GM18951 (cell line): ENCODE measurements at regions of chr2 and their contacts with region 1.

Region 1: DNA sequence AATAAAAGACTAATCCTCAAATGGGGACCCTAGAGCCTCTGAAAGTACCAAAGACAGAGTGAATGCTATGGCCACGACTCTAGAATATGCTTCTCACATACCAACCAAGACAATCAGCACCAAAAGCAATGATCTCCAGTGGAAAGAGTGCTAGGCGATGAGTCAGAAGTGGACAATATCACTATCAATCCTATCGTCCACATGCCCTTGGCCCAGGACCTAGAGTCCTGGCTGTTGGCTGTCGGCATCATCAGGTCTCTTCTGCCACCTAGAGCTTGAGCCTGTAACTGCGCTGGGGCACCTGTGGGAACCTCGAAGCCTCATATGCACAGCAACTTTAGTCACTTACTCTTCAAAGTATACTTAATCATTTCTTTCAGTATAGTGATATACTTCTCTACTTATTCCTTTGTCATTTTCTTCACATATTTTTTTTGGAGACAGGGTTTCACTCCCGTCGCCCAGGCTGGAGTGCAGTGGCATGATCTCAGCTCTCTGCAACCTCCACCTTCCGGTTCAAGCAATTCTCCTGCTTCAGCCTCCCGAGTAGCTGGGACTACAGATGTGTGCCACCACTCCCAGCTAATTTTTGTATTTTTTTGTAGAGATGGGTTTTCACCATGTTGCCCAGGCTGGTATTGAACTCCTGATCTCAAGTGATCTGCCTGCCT is 29.7 kb downstream of the NOL10 start:
- POLR2A ChIP-seq: no peak

Region 2: DNA sequence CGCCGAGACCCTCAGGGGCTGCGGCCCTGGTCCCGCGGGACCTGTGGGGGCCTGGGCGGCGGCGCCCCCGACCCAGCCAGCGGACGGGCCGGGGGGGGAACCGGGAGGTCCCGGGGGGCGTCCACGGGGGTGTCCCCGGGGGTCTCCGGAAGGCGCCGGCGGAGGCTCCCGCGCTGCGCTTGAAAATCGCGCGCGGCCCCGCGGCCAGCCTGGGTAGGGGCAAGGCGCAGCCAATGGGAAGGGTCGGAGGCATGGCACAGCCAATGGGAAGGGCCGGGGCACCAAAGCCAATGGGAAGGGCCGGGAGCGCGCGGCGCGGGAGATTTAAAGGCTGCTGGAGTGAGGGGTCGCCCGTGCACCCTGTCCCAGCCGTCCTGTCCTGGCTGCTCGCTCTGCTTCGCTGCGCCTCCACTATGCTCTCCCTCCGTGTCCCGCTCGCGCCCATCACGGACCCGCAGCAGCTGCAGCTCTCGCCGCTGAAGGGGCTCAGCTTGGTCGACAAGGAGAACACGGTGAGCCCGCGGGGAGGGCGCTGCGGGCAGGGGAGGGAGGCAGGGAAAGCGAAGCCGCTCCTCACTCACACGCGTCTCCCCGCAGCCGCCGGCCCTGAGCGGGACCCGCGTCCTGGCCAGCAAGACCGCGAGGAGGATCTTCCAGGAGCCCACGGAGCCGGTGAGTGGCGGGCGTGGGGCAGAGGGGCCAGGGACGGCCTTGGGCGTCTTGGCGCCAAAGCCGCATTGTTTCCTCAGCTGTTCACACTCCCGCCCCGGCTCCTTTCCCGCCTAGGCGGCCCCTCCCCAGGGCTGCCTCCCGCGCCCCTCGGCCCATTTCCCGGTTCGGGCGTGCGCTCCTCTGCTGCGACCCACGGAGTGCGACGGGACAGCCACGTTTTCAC is 537.4 kb before region 1 on chr2 and contains the start of gene RRM2:
- in situ Hi-C with region 1: loop called (anchors 25 kb)
- POLR2A ChIP-seq: peak; percentile 99

Region 3: DNA sequence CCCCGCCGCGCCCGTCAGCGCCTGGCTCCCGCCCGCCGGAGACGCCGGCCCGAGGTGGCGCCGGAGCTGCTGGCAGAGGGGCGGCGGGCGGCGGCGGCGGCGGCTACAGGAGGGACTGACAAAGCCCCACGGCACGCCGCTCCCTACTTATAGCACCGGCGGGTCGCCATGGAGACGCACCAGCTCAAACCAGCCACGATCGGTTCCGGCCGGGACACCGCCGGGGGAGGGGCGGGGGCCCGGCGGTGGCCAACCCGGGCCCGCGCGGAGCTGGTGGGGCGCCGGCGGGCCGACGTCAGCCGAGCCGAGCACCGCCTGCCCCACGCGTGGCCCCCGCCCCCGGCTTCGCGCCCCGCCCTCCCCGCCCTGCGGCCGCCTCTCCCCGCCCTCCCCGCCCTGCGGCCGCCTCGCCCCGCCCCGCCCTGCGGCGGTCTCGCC is 211.8 kb before region 1 on chr2 and contains the start of gene ODC1:
- in situ Hi-C with region 1: loop called (anchors 10 kb)
- POLR2A ChIP-seq: peak; percentile 98